ENCODE measurements at regions of chr14 and their contacts with region 1.

Region 1: GRCh38 chr14:20413045-20413799 is at the start of gene TEP1:
- DNase-seq: peak; percentile 82
- ATAC-seq: peak; percentile 92
- H3K4me3 Mint-ChIP-seq: peak within 1 kb of the TSS; percentile 94
- H3K27ac Mint-ChIP-seq: peak within 1 kb of the TSS; percentile 95
- H3K4me1 Mint-ChIP-seq: peaks cover 42% of the 10 kb centered on the region
- H3K27me3 Mint-ChIP-seq: no peaks in the 10 kb centered on the region
- total RNA-seq, gene TEP1: 34.6 to 48.7 TPM

Region 2: GRCh38 chr14:20343092-20343861 is 69.9 kb before region 1 on chr14 and contains the start of gene PARP2:
- CTCF ChIA-PET with region 1: interaction called, 18 read pairs
- POLR2A ChIA-PET with region 1: interaction called, 6 read pairs
- DNase-seq: peak; percentile 95
- ATAC-seq: peak; percentile 94
- H3K4me3 Mint-ChIP-seq: peak within 1 kb of the TSS; percentile 93
- H3K27ac Mint-ChIP-seq: peak within 1 kb of the TSS; percentile 98
- H3K4me1 Mint-ChIP-seq: peaks cover 20% of the 10 kb centered on the region
- H3K27me3 Mint-ChIP-seq: peaks cover 5% of the 10 kb centered on the region
- total RNA-seq, gene PARP2: 29.7 to 32.3 TPM

Region 3: GRCh38 chr14:20427231-20428009 is 14.2 kb after region 1 on chr14:
- CTCF ChIA-PET with region 1: interaction called, 38 read pairs
- POLR2A ChIA-PET with region 1: interaction called, 22 read pairs
- DNase-seq: peak; percentile 48
- ATAC-seq: peak; percentile 59
- H3K4me3 Mint-ChIP-seq: peak overlapping the region; percentile 78
- H3K27ac Mint-ChIP-seq: peak overlapping the region; percentile 94
- H3K4me1 Mint-ChIP-seq: peaks cover 45% of the 10 kb centered on the region
- H3K27me3 Mint-ChIP-seq: no peaks in the 10 kb centered on the region

Region 4: DNA sequence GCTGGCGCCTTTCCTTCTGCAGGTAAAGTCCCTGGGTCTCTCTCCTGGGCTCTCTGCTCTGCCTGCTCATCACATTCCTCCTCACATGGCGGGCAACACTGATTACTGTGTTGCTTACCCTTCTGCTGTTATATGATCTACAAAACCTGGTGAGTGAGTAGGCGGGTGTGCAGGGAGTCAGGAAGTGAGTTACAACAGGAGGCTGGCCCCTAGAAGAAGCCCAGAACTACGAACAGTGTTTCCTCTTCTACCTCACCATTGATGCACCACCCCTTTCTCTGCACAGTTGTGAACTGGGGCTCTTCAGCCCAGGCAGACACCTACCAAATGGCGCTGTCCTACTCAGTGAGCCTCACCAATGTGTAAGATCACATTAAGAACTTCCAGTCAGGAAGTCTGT is 27.7 kb after region 1 on chr14:
- CTCF ChIA-PET with region 1: interaction called, 16 read pairs
- POLR2A ChIA-PET with region 1: no interaction called
- DNase-seq: peak; percentile 60
- ATAC-seq: peak; percentile 95
- H3K4me3 Mint-ChIP-seq: peak overlapping the region; percentile 45
- H3K27ac Mint-ChIP-seq: peak overlapping the region; percentile 79
- H3K4me1 Mint-ChIP-seq: peaks cover 24% of the 10 kb centered on the region
- H3K27me3 Mint-ChIP-seq: no peaks in the 10 kb centered on the region

Region 5: GRCh38 chr14:20454516-20455354 is 41.5 kb after region 1 on chr14 and contains the starts of genes APEX1 and OSGEP:
- CTCF ChIA-PET with region 1: interaction called, 53 read pairs
- POLR2A ChIA-PET with region 1: interaction called, 29 read pairs
- DNase-seq: peak; percentile 99
- ATAC-seq: peak; percentile 90
- H3K4me3 Mint-ChIP-seq: peak within 1 kb of the TSS; percentile 36
- H3K27ac Mint-ChIP-seq: no peak within 1 kb of the TSS
- H3K4me1 Mint-ChIP-seq: peaks cover 24% of the 10 kb centered on the region
- H3K27me3 Mint-ChIP-seq: no peaks in the 10 kb centered on the region
- total RNA-seq, gene APEX1: 135 to 142 TPM
- total RNA-seq, gene OSGEP: 51.8 to 56.6 TPM

Region 6: GRCh38 chr14:20461274-20462001 is 48.2 kb after region 1 on chr14 and contains the start of gene PIP4P1:
- CTCF ChIA-PET with region 1: interaction called, 53 read pairs
- POLR2A ChIA-PET with region 1: interaction called, 29 read pairs
- DNase-seq: peak; percentile 99
- ATAC-seq: peak; percentile 97
- H3K4me3 Mint-ChIP-seq: peak within 1 kb of the TSS; percentile 95
- H3K27ac Mint-ChIP-seq: peak within 1 kb of the TSS; percentile 91
- H3K4me1 Mint-ChIP-seq: peaks cover 38% of the 10 kb centered on the region
- H3K27me3 Mint-ChIP-seq: peaks cover 2% of the 10 kb centered on the region
- total RNA-seq, gene PIP4P1: 31.3 to 31.6 TPM

Region 7: GRCh38 chr14:20469242-20469889 is 56.1 kb after region 1 on chr14 and contains the start of gene PNP:
- CTCF ChIA-PET with region 1: interaction called, 17 read pairs
- POLR2A ChIA-PET with region 1: interaction called, 8 read pairs
- DNase-seq: peak; percentile 93
- ATAC-seq: peak; percentile 93
- H3K4me3 Mint-ChIP-seq: peak within 1 kb of the TSS; percentile 87
- H3K27ac Mint-ChIP-seq: peak within 1 kb of the TSS; percentile 94
- H3K4me1 Mint-ChIP-seq: peaks cover 35% of the 10 kb centered on the region
- H3K27me3 Mint-ChIP-seq: no peaks in the 10 kb centered on the region
- total RNA-seq, gene PNP: 211 to 216 TPM

Measured in activated CD8-positive, alpha-beta T cell treated with anti-CD3 and anti-CD28 coated beads, Interleukin-2, amount 10 ng/mL, durations not matched to agents 7 days and 5 days (primary cell).